ENCODE measurements at regions of chr3 and their contacts with region 1.

Region 1: GRCh38 chr3:151227807-151228665 is 25.0 kb upstream of the GPR171 start:
- DNase-seq: peak; percentile 71
- ATAC-seq: peak; percentile 88 to 92
- H3K4me3 ChIP-seq: no peak overlapping the region
- H3K27ac ChIP-seq: peak overlapping the region; percentile 52 to 66
- H3K4me1 ChIP-seq: peaks cover 37% of the 10 kb centered on the region
- CTCF ChIP-seq: peak; percentile 96
- EP300 ChIP-seq: no peak
- POLR2A ChIP-seq: no peak
- RAD21 ChIP-seq: peak; percentile 94 to 95

Region 2: DNA sequence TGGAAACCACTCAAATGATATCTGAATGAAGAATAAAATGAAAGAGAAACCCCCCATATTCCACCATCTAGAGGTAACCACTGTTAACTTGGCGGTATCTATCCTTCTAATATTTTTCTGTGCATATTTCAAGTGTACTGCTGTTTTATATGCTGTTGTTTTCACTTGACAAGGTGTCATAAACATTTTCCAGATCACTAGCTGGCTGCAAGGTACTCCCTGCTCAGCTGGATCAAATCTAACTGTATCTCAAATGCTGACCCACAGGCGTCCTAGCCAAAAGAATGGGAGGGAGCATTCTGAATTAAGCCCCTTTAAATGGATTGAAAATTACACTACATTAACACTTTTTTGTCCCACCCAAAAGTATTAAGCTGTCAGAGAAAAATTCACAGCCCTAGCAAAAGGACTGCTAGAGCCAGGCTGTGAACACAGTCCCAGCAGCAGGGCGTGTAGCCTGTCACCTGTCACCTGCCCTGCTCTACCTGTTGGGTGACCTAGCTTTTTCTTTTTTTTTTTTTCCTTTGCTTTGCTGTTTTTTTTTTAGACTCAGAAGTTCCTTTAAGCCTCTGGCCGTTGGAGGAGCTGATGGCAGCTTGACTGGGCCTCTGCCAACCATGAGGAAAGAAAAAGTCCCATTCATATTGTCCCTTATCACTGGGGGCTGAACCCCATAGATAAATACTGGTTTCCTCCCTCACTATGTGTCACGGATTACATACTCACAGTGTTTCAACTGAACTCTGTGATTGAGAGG is 913.6 kb before region 1 on chr3:
- CTCF ChIA-PET with region 1: no interaction called
- POLR2A ChIA-PET with region 1: no interaction called
- DNase-seq: no peak
- ATAC-seq: no peak
- H3K4me3 ChIP-seq: no peak overlapping the region
- H3K27ac ChIP-seq: peak overlapping the region in 1 of 2 experiments; percentile 27; a peak in 2 of 6 replicates
- H3K4me1 ChIP-seq: peaks cover 31% of the 10 kb centered on the region
- CTCF ChIP-seq: no peak
- EP300 ChIP-seq: no peak
- POLR2A ChIP-seq: no peak
- RAD21 ChIP-seq: no peak

Region 3: GRCh38 chr3:151183265-151183671 is 44.8 kb before region 1 on chr3:
- CTCF ChIA-PET with region 1: interaction called, 19 read pairs
- POLR2A ChIA-PET with region 1: no interaction called
- DNase-seq: no peak
- ATAC-seq: no peak
- H3K4me3 ChIP-seq: no peak overlapping the region
- H3K27ac ChIP-seq: no peak overlapping the region
- H3K4me1 ChIP-seq: no peaks in the 10 kb centered on the region
- CTCF ChIP-seq: no peak
- EP300 ChIP-seq: no peak
- POLR2A ChIP-seq: no peak
- RAD21 ChIP-seq: no peak

Region 4: DNA sequence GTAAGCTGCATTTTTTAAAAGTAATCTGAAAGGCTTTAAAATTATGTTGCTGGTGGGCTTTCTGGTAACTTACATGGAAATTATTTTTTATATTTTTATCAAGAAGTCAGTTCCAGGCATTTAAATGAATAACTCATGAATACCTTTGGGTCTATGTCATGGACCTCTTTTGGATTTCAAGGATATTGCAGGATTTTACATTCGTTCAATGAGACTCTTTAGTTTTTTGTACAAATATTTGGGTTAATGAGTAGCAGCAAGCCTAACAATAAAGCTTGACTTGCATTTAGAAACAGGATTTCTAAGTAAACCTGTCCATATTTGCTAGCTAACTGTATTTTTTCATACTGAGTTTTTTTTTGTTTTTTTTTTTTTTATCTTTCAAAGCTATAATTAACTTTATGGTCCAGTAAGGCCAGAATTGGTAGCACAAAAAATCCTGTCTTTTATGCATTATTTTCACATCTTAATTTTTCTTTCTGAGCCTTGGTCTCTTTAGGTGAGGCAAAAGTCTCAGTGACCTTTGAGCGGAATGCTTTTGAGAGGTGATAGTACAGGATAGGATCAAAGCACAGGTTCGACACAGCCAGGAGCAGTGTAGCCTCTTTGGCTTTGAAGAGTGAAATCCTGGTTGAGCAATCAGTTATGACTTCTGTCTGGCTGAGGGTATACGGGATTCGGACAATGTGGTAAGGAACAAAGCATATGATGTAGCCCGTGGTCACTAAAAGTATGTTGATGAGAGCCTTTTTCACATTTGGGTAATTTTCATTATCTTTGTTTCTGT is 29.9 kb before region 1 on chr3:
- CTCF ChIA-PET with region 1: interaction called, 13 read pairs
- POLR2A ChIA-PET with region 1: no interaction called
- DNase-seq: no peak
- ATAC-seq: peak in 1 of 2 experiments; percentile 47; a peak in 1 of 6 replicates
- H3K4me3 ChIP-seq: no peak overlapping the region
- H3K27ac ChIP-seq: peak overlapping the region; percentile 39 to 55
- H3K4me1 ChIP-seq: peaks cover 18% of the 10 kb centered on the region; the same call in 2 of the 3 replicates
- CTCF ChIP-seq: no peak
- EP300 ChIP-seq: no peak
- POLR2A ChIP-seq: no peak
- RAD21 ChIP-seq: no peak

Region 5: GRCh38 chr3:151248772-151249337 is 20.8 kb after region 1 on chr3:
- CTCF ChIA-PET with region 1: interaction called, 13 read pairs
- POLR2A ChIA-PET with region 1: no interaction called
- DNase-seq: no peak
- ATAC-seq: no peak
- H3K4me3 ChIP-seq: no peak overlapping the region
- H3K27ac ChIP-seq: no peak overlapping the region
- H3K4me1 ChIP-seq: no peaks in the 10 kb centered on the region
- CTCF ChIP-seq: no peak
- EP300 ChIP-seq: no peak
- POLR2A ChIP-seq: no peak
- RAD21 ChIP-seq: no peak

Region 6: GRCh38 chr3:151268267-151269235 is 40.5 kb after region 1 on chr3:
- CTCF ChIA-PET with region 1: interaction called, 12 read pairs
- POLR2A ChIA-PET with region 1: no interaction called
- DNase-seq: no peak
- ATAC-seq: no peak
- H3K4me3 ChIP-seq: no peak overlapping the region
- H3K27ac ChIP-seq: no peak overlapping the region
- H3K4me1 ChIP-seq: no peaks in the 10 kb centered on the region
- CTCF ChIP-seq: no peak
- EP300 ChIP-seq: no peak
- POLR2A ChIP-seq: no peak
- RAD21 ChIP-seq: no peak

Region 7: DNA sequence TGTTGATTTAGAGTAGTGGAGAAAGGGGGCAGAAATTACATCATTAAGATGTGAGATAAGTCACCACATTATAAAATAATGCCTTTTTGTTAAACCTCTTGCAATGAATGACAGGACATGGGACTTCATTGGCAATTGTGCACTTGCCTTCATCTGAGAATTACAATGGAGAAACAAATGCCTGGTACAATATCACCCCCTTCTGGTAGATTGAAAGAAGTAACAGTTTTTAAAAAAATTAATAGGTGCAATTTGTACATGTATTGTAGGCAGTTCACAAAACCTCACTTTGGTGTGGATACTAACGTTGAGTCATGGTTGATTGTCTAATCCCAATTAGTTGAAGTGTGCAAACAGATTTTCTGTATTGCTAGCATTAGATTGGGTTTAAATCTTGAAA is 54.9 kb after region 1 on chr3:
- CTCF ChIA-PET with region 1: interaction called, 136 read pairs
- POLR2A ChIA-PET with region 1: no interaction called
- DNase-seq: peak; percentile 60 to 63
- ATAC-seq: peak; percentile 63 to 85; a peak in 3 of 6 replicates
- H3K4me3 ChIP-seq: no peak overlapping the region
- H3K27ac ChIP-seq: no peak overlapping the region
- H3K4me1 ChIP-seq: peaks cover 11% of the 10 kb centered on the region; the same call in 2 of the 3 replicates
- CTCF ChIP-seq: peak; percentile 85
- EP300 ChIP-seq: no peak
- POLR2A ChIP-seq: no peak
- RAD21 ChIP-seq: peak; percentile 88 to 89

Region 8: GRCh38 chr3:151290673-151291072 is 62.6 kb after region 1 on chr3:
- CTCF ChIA-PET with region 1: interaction called, 59 read pairs
- POLR2A ChIA-PET with region 1: no interaction called
- DNase-seq: peak in 1 of 2 experiments; percentile 48
- ATAC-seq: peak; percentile 47 to 54; a peak in 1 of 6 replicates
- H3K4me3 ChIP-seq: no peak overlapping the region
- H3K27ac ChIP-seq: no peak overlapping the region
- H3K4me1 ChIP-seq: no peaks in the 10 kb centered on the region
- CTCF ChIP-seq: peak; percentile 89
- EP300 ChIP-seq: no peak
- POLR2A ChIP-seq: no peak
- RAD21 ChIP-seq: peak; percentile 92 to 94

Measured in A549 (cell line).